Sciatic nerve (tissue), 2 donors: ENCODE measurements at regions of chr7 and their contacts with region 1.

Region 1: GRCh38 chr7:122864016-122864415 is 22.2 kb downstream of the CADPS2 start:
- DNase-seq: no peak
- ATAC-seq: no peak

Region 2: DNA sequence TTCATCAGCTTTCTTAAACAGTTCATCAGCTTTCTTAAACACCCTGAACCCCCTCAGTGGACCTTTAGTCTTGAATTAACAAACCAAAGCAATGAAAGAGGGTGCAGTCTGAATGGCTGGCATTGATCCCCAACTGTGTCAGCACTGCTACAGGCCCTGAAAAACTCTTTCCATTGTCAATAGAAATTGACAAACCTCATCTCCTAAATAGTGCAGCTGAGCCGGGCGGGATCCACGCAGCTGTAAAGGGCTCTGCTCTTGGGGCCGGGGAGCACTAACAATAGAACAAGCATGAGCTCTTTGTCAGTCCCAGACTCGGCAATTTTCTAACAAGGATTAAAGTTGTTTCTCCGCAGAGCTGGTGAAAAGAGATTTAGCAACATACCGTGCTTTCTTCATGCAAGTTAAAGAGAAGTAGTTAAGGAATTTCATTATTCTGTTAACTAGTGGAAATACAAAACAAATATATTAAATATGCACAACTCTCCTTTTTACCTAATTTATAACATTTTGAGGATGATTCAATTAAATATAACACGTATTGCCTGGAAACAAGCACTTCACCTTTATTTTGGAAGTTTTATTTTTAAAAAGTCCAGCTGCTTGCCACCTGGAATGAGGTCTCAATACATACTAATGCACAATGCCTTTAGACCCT is 534.7 kb before region 1 on chr7:
- intact Hi-C with region 1: loop called (anchors 5 kb)
- DNase-seq: no peak
- ATAC-seq: no peak